Stomach (tissue), 19 donors: ENCODE measurements at regions of chr6 and their contacts with region 1.

Region 1: GRCh38 chr6:75526502-75527127 is 33.0 kb upstream of the FILIP1 start:
- DNase-seq: peak; percentile 69 to 89
- H3K4me3 ChIP-seq: no peak overlapping the region
- H3K27ac ChIP-seq: no peak overlapping the region
- H3K4me1 ChIP-seq: peaks cover 7 to 17% (median 9%) of the 10 kb centered on the region in 4 donors
- H3K27me3 ChIP-seq: no peaks in the 10 kb centered on the region
- CTCF ChIP-seq: peak in 5 of 7 experiments; percentile 52 to 71 (median 70)
- EP300 ChIP-seq: no peak
- POLR2A ChIP-seq: no peak

Region 2: DNA sequence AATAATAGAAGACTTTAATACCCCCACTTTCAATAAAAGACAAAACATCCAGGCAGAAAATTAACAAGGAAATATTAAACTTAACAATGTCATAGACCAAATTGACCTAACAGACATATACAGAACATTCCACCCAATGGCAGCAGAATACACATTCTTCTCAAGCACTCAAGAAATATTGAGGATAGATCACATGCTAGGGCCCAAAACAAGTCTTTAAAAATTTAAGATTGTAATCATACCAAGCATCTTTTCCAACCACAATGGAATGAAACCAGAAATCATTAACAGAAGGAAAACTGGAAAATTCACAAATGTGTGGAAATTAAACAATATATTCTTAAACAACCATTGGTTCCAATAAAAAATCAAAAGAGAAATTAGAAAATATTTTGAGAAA is 481.8 kb before region 1 on chr6:
- intact Hi-C with region 1: no loop called
- DNase-seq: no peak
- H3K4me3 ChIP-seq: no peak overlapping the region
- H3K27ac ChIP-seq: no peak overlapping the region
- H3K4me1 ChIP-seq: no peaks in the 10 kb centered on the region
- H3K27me3 ChIP-seq: no peaks in the 10 kb centered on the region
- CTCF ChIP-seq: no peak
- EP300 ChIP-seq: no peak
- POLR2A ChIP-seq: no peak

Region 3: GRCh38 chr6:75266716-75267291 is 259.8 kb before region 1 on chr6:
- intact Hi-C with region 1: loop called (anchors 10 kb)
- DNase-seq: peak in 1 of 2 donors; percentile 68
- H3K4me3 ChIP-seq: no peak overlapping the region
- H3K27ac ChIP-seq: no peak overlapping the region
- H3K4me1 ChIP-seq: peaks cover 0 to 51% (median 30%) of the 10 kb centered on the region in 4 donors
- H3K27me3 ChIP-seq: no peaks in the 10 kb centered on the region
- CTCF ChIP-seq: peak in 5 of 7 experiments; percentile 54 to 81 (median 74)
- EP300 ChIP-seq: no peak
- POLR2A ChIP-seq: no peak

Region 4: DNA sequence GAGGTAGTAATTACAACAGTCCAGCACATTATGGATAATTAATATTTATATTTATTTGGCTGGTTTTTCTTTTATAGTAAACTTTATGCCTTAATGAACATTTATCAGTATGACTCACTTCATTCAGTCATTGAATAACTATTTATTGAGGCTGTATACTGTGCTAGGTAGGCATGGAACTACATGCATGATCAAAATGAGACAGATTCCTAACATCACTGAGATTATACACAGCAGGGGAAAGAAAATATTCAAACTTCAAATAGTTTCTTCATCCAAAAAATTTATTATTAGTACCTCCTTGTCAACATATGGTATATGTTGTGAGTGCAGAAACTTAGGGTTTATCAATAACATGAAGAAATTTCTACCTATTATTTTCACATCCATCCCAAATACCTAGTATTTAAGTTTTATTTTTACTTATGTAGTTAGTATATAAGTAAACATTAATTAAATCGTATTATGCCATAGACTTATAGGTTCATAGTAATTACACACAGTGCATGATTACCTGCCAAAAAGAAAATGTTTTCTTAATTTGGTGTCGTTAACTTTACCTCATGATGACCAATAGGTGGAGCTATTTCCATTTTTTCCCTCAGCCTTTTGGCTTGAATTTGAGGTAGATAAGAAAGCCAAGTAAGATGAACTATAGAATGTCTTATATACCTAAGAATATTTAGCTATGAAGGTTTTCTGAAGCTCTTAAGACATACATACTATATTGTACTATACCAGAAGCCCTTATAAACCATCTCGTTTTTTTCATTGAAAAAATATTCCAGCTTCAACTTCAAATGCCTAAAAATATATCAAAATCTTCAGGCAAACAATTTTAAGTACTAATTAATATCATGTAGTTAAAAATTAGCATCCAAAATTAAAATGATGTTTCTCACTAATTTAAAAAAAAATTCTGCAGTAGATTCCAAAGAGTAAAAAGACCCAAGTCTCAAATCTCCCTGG is 229.5 kb before region 1 on chr6:
- intact Hi-C with region 1: loop called (anchors 10 kb)
- DNase-seq: peak in 1 of 2 donors; percentile 80
- H3K4me3 ChIP-seq: no peak overlapping the region
- H3K27ac ChIP-seq: no peak overlapping the region
- H3K4me1 ChIP-seq: peaks cover 0 to 20% (median 12%) of the 10 kb centered on the region in 4 donors
- H3K27me3 ChIP-seq: no peaks in the 10 kb centered on the region
- CTCF ChIP-seq: peak in 5 of 7 experiments; percentile 37 to 83 (median 62)
- EP300 ChIP-seq: no peak
- POLR2A ChIP-seq: no peak

Region 5: GRCh38 chr6:75368151-75368779 is 158.3 kb before region 1 on chr6:
- intact Hi-C with region 1: loop called (anchors 10 kb)
- DNase-seq: peak; percentile 36 to 81
- H3K4me3 ChIP-seq: no peak overlapping the region
- H3K27ac ChIP-seq: peak overlapping the region in 2 of 5 donors; percentile 41 to 49
- H3K4me1 ChIP-seq: peaks cover 0 to 21% (median 7%) of the 10 kb centered on the region in 4 donors
- H3K27me3 ChIP-seq: no peaks in the 10 kb centered on the region
- CTCF ChIP-seq: peak in 4 of 7 experiments; percentile 22 to 51 (median 30)
- EP300 ChIP-seq: no peak
- POLR2A ChIP-seq: no peak

Region 6: DNA sequence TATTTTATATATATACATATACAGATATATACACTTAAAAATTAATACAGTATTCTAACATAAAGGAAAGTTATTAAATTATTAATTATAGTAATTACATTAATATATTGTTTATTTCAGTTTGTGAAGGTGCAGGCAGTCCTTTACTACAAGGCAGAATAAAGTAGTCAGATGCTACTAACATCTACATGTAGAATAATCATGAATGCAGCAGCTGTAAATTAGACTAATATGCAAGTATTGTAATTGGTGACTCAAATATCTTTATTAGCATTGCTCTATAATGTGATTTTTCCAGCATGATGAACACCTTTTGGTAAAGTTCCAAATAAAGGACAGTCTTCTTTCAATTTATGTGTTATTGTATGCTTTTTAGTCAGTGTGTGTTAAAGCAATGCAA is 239.8 kb after region 1 on chr6:
- intact Hi-C with region 1: no loop called
- DNase-seq: no peak
- H3K4me3 ChIP-seq: no peak overlapping the region
- H3K27ac ChIP-seq: no peak overlapping the region
- H3K4me1 ChIP-seq: peaks cover 0 to 8% (median 4%) of the 10 kb centered on the region in 4 donors
- H3K27me3 ChIP-seq: no peaks in the 10 kb centered on the region
- CTCF ChIP-seq: no peak
- EP300 ChIP-seq: no peak
- POLR2A ChIP-seq: no peak

Region 7: GRCh38 chr6:75893058-75893775 is 366.6 kb after region 1 on chr6:
- intact Hi-C with region 1: no loop called
- DNase-seq: peak in 1 of 2 donors; percentile 82
- H3K4me3 ChIP-seq: no peak overlapping the region
- H3K27ac ChIP-seq: no peak overlapping the region
- H3K4me1 ChIP-seq: peaks cover 0 to 11% (median 0%) of the 10 kb centered on the region in 4 donors
- H3K27me3 ChIP-seq: no peaks in the 10 kb centered on the region
- CTCF ChIP-seq: peak in 5 of 7 experiments; percentile 19 to 69 (median 50)
- EP300 ChIP-seq: no peak
- POLR2A ChIP-seq: no peak